Activated CD4-positive, alpha-beta T cell treated with anti-CD3 and anti-CD28 coated beads for 36 hours (primary cell): ENCODE measurements at regions of chr4 and their contacts with region 1.

Region 1: GRCh38 chr4:55948726-55949474 is at the start of gene CEP135:
- DNase-seq: peak; percentile 96
- ATAC-seq: peak; percentile 81
- H3K4me3 Mint-ChIP-seq: peak within 1 kb of the TSS; percentile 79
- H3K27ac Mint-ChIP-seq: peak within 1 kb of the TSS; percentile 94
- H3K4me1 Mint-ChIP-seq: peaks cover 37% of the 10 kb centered on the region
- H3K27me3 Mint-ChIP-seq: no peaks in the 10 kb centered on the region
- total RNA-seq, gene CEP135: 17.0 to 17.5 TPM

Region 2: DNA sequence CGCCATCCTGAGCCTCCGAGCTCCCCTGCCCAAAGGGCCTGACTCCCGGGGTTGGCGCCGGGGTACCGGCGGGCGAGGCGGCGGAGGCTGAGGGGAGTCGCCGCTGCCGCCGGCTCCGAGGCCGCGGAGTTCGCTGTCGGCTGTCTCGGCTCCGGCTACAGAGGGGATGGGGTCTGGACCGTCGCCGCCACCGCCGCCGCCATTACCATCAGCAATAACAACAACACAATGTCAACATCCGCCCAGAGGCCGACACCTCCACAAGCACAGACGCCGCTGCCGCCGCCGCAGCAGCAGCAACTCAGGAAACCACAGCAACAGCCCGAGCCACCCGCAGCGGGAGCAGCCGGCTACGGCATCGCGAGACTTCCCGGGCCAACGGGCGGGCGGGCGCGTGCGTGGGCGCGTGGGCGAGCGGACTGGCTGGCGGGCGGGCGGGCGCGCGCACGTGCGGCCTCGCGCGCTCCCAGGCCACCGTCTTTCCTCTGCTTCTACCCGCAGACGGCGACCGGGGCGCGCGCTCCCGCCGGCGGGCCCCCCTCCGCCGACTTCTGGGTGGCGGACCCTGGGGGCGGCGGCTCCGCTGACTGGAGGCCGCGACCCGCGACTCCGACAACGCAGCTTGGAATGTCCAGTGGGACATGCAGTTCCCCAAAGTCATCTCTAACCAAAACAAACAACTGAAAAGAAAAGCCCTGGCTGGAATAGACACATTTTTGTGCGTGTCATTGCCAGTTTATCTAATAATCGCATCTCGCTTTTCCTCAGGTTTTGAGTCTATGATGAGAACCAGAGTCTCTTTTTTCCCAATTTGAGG is 1884.4 kb before region 1 on chr4 and contains the start of gene CHIC2:
- CTCF ChIA-PET with region 1: no interaction called
- POLR2A ChIA-PET with region 1: no interaction called
- intact Hi-C with region 1: loop called in 1 of 2 experiments (anchors 10 kb)
- DNase-seq: peak; percentile 98
- ATAC-seq: peak; percentile 84
- H3K4me3 Mint-ChIP-seq: peak within 1 kb of the TSS; percentile 94
- H3K27ac Mint-ChIP-seq: peak within 1 kb of the TSS; percentile 94
- H3K4me1 Mint-ChIP-seq: peaks cover 41% of the 10 kb centered on the region
- H3K27me3 Mint-ChIP-seq: no peaks in the 10 kb centered on the region
- total RNA-seq, gene CHIC2: 14.7 to 17.7 TPM

Region 3: DNA sequence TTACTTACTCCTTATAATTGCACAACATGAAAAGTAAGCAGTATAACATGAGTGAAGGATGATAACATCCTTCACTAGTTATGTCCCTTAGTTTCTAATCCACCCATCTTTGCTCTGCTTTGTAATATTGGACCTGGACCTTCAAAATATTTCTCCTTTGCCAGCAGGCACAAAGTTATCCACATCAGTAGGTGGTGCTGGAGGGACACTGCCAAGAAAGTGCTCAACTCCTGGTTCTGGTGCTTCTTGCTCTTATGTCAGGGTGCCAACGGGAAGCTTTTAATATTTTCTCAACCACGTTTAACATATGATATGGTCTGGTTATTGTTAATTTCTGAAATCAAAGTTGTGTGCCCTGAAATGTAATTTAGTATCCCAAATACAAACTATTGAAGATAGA is 504.1 kb before region 1 on chr4:
- CTCF ChIA-PET with region 1: no interaction called
- POLR2A ChIA-PET with region 1: no interaction called
- intact Hi-C with region 1: no loop called
- DNase-seq: no peak
- ATAC-seq: no peak
- H3K4me3 Mint-ChIP-seq: no peak overlapping the region
- H3K27ac Mint-ChIP-seq: no peak overlapping the region
- H3K4me1 Mint-ChIP-seq: peaks cover 7% of the 10 kb centered on the region
- H3K27me3 Mint-ChIP-seq: no peaks in the 10 kb centered on the region

Region 4: GRCh38 chr4:55468724-55469123 is 480.2 kb before region 1 on chr4:
- CTCF ChIA-PET with region 1: no interaction called
- POLR2A ChIA-PET with region 1: no interaction called
- intact Hi-C with region 1: no loop called
- DNase-seq: no peak
- ATAC-seq: no peak
- H3K4me3 Mint-ChIP-seq: no peak overlapping the region
- H3K27ac Mint-ChIP-seq: no peak overlapping the region
- H3K4me1 Mint-ChIP-seq: no peaks in the 10 kb centered on the region
- H3K27me3 Mint-ChIP-seq: no peaks in the 10 kb centered on the region

Region 5: GRCh38 chr4:55853484-55854046 is 95.3 kb before region 1 on chr4 and contains the start of gene EXOC1:
- CTCF ChIA-PET with region 1: interaction called, 3 read pairs
- POLR2A ChIA-PET with region 1: no interaction called
- intact Hi-C with region 1: loop called (anchors 1 to 2 kb)
- DNase-seq: peak; percentile 99
- ATAC-seq: peak; percentile 98
- H3K4me3 Mint-ChIP-seq: no peak within 1 kb of the TSS
- H3K27ac Mint-ChIP-seq: peak within 1 kb of the TSS; percentile 83
- H3K4me1 Mint-ChIP-seq: peaks cover 35% of the 10 kb centered on the region
- H3K27me3 Mint-ChIP-seq: no peaks in the 10 kb centered on the region
- total RNA-seq, gene EXOC1: 19.1 to 21.4 TPM

Region 6: GRCh38 chr4:55920571-55920970 is 28.3 kb before region 1 on chr4:
- CTCF ChIA-PET with region 1: no interaction called
- POLR2A ChIA-PET with region 1: no interaction called
- intact Hi-C with region 1: no loop called
- DNase-seq: no peak
- ATAC-seq: no peak
- H3K4me3 Mint-ChIP-seq: no peak overlapping the region
- H3K27ac Mint-ChIP-seq: no peak overlapping the region
- H3K4me1 Mint-ChIP-seq: no peaks in the 10 kb centered on the region
- H3K27me3 Mint-ChIP-seq: no peaks in the 10 kb centered on the region

Region 7: DNA sequence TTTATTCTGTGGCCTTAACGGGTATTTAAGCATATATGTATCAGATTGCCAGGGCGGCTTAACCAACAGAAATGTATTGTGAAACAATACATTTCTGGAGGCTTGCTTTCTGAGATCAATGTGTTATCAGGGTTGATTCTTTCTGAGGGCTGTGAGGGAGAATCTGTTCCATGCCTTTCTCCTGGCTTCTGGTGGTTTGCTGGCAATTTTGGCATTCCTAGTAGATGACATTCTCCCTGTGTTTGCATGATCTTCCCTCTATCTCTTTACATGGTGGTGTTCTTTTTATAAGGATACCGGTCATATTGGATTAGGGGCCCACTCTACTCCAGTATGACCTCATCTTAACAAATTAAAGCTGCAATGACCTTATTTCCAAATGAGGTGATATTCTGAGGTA is 17.1 kb before region 1 on chr4:
- CTCF ChIA-PET with region 1: interaction called, 17 read pairs
- POLR2A ChIA-PET with region 1: no interaction called
- intact Hi-C with region 1: no loop called
- DNase-seq: no peak
- ATAC-seq: no peak
- H3K4me3 Mint-ChIP-seq: no peak overlapping the region
- H3K27ac Mint-ChIP-seq: no peak overlapping the region
- H3K4me1 Mint-ChIP-seq: peaks cover 3% of the 10 kb centered on the region
- H3K27me3 Mint-ChIP-seq: no peaks in the 10 kb centered on the region

Region 8: GRCh38 chr4:56301181-56302076 is 352.5 kb after region 1 on chr4:
- CTCF ChIA-PET with region 1: interaction called, 6 read pairs
- POLR2A ChIA-PET with region 1: no interaction called
- intact Hi-C with region 1: loop called (anchors 1 kb)
- DNase-seq: peak; percentile 79
- ATAC-seq: peak; percentile 97
- H3K4me3 Mint-ChIP-seq: peak overlapping the region; percentile 40
- H3K27ac Mint-ChIP-seq: peak overlapping the region; percentile 33
- H3K4me1 Mint-ChIP-seq: peaks cover 12% of the 10 kb centered on the region
- H3K27me3 Mint-ChIP-seq: no peaks in the 10 kb centered on the region

Region 9: DNA sequence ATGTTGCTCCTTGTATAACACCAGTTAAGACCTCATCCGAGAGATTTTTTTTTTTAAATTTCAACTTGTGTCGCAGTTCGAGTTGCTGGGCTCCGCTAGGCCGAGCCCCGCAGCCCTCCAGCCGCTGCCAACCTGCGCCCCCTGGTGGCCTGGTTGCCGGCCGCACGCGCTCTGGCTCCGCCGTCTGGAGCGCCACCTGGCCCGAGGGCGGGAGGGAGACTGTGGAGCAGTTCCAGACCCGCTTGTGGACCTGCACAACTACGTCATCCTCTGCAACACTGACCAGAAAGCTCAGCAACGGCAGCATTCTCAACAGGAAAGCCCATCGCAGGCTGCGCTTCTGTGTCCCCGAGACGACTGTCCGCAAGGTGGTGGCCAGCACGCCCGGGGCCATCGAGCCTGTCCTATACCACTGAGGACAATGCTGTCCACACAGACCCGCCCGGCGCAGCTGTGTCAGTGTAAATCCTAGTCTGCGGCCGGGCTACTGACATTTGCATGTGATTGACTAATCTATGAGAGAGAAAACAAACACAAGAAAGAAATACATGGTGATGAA is 595.8 kb after region 1 on chr4:
- CTCF ChIA-PET with region 1: no interaction called
- POLR2A ChIA-PET with region 1: no interaction called
- intact Hi-C with region 1: loop called in 1 of 2 experiments (anchors 2 kb)
- DNase-seq: peak; percentile 92
- ATAC-seq: peak; percentile 100
- H3K4me3 Mint-ChIP-seq: peak overlapping the region; percentile 54
- H3K27ac Mint-ChIP-seq: no peak overlapping the region
- H3K4me1 Mint-ChIP-seq: peaks cover 16% of the 10 kb centered on the region
- H3K27me3 Mint-ChIP-seq: peaks cover 3% of the 10 kb centered on the region

Region 10: GRCh38 chr4:57214654-57215411 is 1265.9 kb after region 1 on chr4:
- CTCF ChIA-PET with region 1: no interaction called
- POLR2A ChIA-PET with region 1: no interaction called
- intact Hi-C with region 1: no loop called
- DNase-seq: no peak
- ATAC-seq: no peak
- H3K4me3 Mint-ChIP-seq: no peak overlapping the region
- H3K27ac Mint-ChIP-seq: no peak overlapping the region
- H3K4me1 Mint-ChIP-seq: no peaks in the 10 kb centered on the region
- H3K27me3 Mint-ChIP-seq: no peaks in the 10 kb centered on the region